GM12878 (cell line): ENCODE measurements at regions of chr11 and their contacts with region 1.

Region 1: DNA sequence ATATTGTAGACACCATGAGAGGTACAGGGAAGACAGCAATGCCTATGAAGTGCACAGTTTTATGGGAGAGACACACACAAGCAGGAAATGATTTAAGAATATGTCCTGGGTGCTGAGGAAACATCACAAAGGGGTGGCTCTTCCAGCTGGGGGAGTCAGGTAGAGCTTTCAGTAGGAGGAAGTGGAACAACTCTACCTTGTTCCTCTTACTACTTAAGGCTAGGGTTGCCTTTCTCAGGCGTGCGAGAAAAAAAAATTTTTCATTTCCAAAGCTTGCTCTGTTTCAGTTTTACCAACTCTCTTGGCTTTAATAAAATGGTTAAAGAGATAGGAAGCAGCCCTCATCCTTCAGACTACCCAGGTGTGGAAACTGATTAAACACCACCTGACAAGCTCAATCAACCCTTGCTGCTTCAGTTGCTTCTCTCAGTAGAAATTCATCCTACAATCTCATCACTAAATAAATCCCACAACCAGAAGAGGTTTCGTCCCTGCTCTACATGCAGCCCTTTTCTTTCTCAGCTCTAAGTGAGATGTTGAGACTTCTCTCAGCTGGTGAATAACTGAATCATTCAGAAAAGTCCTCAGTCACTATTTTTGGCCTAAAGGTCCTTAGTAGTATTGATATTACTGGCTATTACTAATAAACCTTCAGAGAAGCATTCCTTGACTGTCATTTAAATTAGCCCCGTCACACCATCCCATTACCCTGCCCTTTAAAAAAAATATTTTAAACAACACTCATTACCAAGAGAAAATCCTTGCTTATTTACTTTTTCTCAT is 5.9 kb downstream of the ABTB2 start:
- DNase-seq: peak; percentile 50
- ATAC-seq: peak; percentile 66
- H3K4me3 ChIP-seq: peak overlapping the region; percentile 28; the same call in 1 of the 2 replicates
- H3K27ac ChIP-seq: peak overlapping the region; percentile 20; the same call in 1 of the 2 replicates
- H3K4me1 ChIP-seq: peaks cover 17% of the 10 kb centered on the region
- H3K27me3 ChIP-seq: peaks cover 0 to 3% of the 10 kb centered on the region in 2 experiments; a peak in 2 of 4 replicates
- CTCF ChIP-seq: no peak
- EP300 ChIP-seq: no peak
- POLR2A ChIP-seq: no peak
- RAD21 ChIP-seq: no peak

Region 2: DNA sequence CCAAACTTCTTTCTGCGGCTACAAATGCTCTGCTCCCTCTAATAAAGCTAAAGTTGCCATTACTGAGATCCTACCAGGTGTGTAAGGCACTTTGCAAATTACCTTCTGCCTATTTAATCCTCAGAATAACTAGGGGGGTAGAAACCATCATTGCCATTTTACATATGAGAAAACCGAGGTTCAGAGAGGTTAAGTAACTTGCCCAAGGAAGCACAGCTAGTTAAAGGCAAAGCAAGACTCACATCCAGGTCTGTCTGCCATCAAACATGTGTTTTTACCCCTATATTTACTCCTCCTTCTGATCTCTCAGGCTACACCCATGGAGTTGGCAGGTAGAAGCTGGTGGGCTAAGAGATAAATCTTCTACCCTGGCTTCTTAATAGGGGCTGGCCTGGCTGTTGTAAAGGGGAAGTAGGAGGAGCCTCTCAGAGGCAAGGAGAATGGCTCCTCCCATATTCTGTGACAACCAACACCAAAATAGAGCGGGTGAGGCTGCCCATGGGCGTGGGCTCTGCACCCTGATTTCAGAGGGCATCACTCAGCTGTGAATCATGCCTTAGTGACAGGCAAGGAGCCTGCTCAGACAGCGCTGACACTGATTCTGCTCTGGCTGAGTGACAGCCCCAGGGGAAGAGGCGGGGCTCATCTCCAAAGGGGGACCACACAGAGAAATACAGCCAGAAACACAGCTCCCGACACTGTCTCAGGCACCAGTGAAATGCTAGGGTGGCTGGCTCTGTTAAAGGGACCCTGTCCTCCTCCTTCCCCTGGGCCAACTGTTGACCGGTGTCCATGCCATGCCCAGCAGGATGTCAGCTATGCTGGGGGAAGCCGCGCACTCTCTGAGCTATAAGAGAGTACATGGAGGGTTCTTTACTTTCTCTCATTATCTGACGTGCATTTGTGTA is 100.9 kb before region 1 on chr11:
- CTCF ChIA-PET with region 1: interaction called, 4 read pairs
- POLR2A ChIA-PET with region 1: interaction called, 4 read pairs
- RAD21 ChIA-PET with region 1: interaction called, 14 read pairs
- SMC1A ChIA-PET with region 1: interaction called, 28 read pairs
- in situ Hi-C with region 1: no loop called
- intact Hi-C with region 1: no loop called
- DNase-seq: no peak
- ATAC-seq: peak; percentile 86
- H3K4me3 ChIP-seq: no peak overlapping the region
- H3K27ac ChIP-seq: no peak overlapping the region
- H3K4me1 ChIP-seq: peaks cover 16% of the 10 kb centered on the region
- H3K27me3 ChIP-seq: no peaks in the 10 kb centered on the region
- CTCF ChIP-seq: no peak
- EP300 ChIP-seq: no peak
- POLR2A ChIP-seq: no peak
- RAD21 ChIP-seq: no peak

Region 3: GRCh38 chr11:34339149-34340064 is 12.5 kb before region 1 on chr11:
- CTCF ChIA-PET with region 1: interaction called, 12 read pairs
- POLR2A ChIA-PET with region 1: interaction called, 4 read pairs
- RAD21 ChIA-PET with region 1: interaction called, 6 read pairs
- SMC1A ChIA-PET with region 1: interaction called, 16 read pairs
- in situ Hi-C with region 1: no loop called
- intact Hi-C with region 1: no loop called
- DNase-seq: peak; percentile 23
- ATAC-seq: peak; percentile 94
- H3K4me3 ChIP-seq: no peak overlapping the region
- H3K27ac ChIP-seq: no peak overlapping the region
- H3K4me1 ChIP-seq: peaks cover 3% of the 10 kb centered on the region
- H3K27me3 ChIP-seq: no peaks in the 10 kb centered on the region
- CTCF ChIP-seq: no peak
- EP300 ChIP-seq: 0 out of 4 replicates have a peak, but pooled peaks of 1 of the 2 experiments have one; percentile 10
- POLR2A ChIP-seq: no peak
- RAD21 ChIP-seq: no peak

Region 4: DNA sequence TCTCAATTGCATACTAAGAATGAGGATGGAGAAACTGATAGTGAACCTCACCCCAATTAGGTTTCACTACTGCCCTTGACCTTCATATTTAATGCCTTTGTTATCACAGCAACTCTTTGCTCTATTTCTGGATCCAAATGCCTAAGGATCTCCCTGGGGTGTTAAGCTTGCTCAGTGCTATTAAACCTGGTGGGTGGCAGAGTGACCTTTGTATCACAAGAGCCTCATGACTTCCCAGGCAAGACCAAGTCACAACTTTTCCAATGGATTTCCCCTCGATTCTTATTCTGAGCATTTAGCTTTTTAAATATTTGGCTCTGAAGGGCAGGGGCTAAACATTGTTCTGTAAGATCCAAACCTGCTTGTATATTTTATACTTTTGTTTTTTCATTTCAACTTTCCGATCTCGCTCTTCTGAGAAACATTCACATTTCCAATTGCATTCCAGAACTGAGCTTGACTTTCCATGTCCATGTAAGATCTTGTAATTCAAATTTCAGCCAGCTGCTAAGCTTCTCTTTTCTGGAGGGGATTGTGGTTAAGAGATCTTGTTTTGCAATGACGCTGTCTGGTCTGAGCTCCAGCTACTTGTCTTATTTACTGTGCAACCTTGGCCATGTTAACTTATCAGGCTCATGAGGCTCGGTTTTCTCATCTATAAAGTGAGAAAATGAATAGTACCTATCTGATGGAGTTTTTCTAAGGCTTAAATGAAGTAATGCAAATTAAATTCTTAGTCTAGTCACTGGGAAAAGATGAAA is 262.6 kb after region 1 on chr11:
- CTCF ChIA-PET with region 1: no interaction called
- POLR2A ChIA-PET with region 1: no interaction called
- RAD21 ChIA-PET with region 1: no interaction called
- SMC1A ChIA-PET with region 1: no interaction called
- in situ Hi-C with region 1: no loop called
- intact Hi-C with region 1: no loop called
- DNase-seq: no peak
- ATAC-seq: peak; percentile 62
- H3K4me3 ChIP-seq: no peak overlapping the region
- H3K27ac ChIP-seq: no peak overlapping the region
- H3K4me1 ChIP-seq: peaks cover 20% of the 10 kb centered on the region
- H3K27me3 ChIP-seq: peaks cover 0 to 5% of the 10 kb centered on the region in 2 experiments; a peak in 1 of 4 replicates
- CTCF ChIP-seq: no peak
- EP300 ChIP-seq: no peak
- POLR2A ChIP-seq: no peak
- RAD21 ChIP-seq: no peak